ENCODE measurements at regions of chr3 and their contacts with region 1.

Region 1: DNA sequence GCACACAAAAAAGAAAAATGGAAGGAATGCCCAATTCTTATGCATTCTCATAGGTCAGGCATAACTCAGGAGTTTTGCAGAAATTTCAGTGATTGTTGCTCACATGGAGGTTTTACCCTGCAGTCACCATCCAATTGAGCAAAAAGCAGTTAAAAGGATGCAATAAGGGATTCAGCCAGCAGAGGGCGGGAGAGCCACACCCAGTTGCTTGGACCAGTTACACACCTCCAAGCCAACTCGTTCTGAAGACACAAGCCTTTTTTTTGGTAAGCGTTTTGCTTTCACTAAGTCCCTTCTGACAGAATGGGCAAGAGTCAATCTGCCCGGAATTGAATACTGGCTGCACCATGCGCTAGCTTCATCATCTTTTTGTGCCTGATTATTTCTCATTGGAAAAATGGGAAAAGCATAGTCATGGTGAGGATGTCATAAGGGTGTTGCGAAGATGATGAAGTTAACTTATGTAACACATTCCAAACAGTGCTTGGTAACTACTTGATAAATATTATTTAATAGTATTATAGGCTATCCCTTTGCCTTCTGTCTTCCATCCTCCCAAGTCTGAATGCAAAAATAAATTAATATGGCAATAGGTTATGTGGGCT is 154.4 kb upstream of the SGO1 start:
- DNase-seq: peak; percentile 66
- H3K4me3 ChIP-seq: no peak overlapping the region
- H3K27ac ChIP-seq: no peak overlapping the region
- H3K4me1 ChIP-seq: no peaks in the 10 kb centered on the region
- CTCF ChIP-seq: peak; percentile 90

Region 2: DNA sequence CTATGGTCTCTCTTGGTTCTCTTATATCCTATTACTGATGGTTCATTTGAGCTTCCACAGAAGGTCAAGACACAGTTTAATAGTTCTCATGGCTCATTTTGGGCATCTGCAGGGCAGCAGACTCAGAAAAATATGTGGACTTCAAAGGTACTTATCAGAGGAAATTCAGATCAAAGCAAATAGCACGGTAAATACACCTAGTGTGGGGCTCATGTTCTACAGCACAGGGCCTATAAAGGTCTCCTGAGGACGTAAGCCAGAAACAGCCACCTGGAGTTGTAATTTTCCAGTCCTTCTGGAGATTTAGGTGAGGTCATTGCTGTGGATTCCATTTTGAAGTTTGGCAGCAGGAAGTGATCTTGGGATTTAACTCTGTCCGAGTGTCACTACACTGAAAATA is 19.9 kb before region 1 on chr3:
- CTCF ChIA-PET with region 1: no interaction called
- POLR2A ChIA-PET with region 1: no interaction called
- intact Hi-C with region 1: no loop called
- DNase-seq: no peak
- H3K4me3 ChIP-seq: no peak overlapping the region
- H3K27ac ChIP-seq: no peak overlapping the region
- H3K4me1 ChIP-seq: no peaks in the 10 kb centered on the region
- CTCF ChIP-seq: no peak

Region 3: GRCh38 chr3:21894459-21895340 is 1554.3 kb after region 1 on chr3:
- CTCF ChIA-PET with region 1: no interaction called
- POLR2A ChIA-PET with region 1: no interaction called
- intact Hi-C with region 1: loop called (anchors 10 kb)
- DNase-seq: no peak
- H3K4me3 ChIP-seq: no peak overlapping the region
- H3K27ac ChIP-seq: no peak overlapping the region
- H3K4me1 ChIP-seq: no peaks in the 10 kb centered on the region
- CTCF ChIP-seq: peak; percentile 78

Region 4: DNA sequence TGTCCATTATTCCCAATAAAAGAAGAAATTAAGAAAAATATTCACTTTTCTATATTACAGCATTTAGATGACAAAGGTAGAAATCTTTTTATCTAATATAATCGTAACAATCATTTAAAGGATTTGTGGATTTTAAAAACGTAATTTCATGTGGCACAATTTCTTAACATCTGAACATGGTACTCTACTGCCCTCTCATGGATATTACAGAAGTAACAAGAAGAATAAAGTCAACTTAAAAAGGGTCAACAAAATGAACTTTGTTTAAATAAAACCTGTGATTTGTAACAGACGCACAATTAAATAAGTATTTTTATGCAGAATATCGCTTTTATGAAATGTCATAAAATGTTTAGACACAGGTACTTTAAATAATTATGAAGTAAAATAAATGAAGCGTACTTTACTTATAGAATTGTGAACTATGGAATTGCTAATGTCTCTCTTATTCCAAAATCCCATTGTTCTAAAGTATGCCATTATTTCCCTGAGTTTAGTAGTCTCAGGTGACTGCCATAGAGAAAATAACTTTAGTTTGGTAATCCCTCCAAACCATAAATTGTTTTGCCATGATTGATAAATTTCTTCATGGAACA is 1777.4 kb after region 1 on chr3:
- CTCF ChIA-PET with region 1: no interaction called
- POLR2A ChIA-PET with region 1: no interaction called
- intact Hi-C with region 1: loop called (anchors 5 kb)
- DNase-seq: peak; percentile 38
- H3K4me3 ChIP-seq: no peak overlapping the region
- H3K27ac ChIP-seq: no peak overlapping the region
- H3K4me1 ChIP-seq: no peaks in the 10 kb centered on the region
- CTCF ChIP-seq: peak; percentile 88